Right ventricle myocardium inferior (tissue), 1 donor: ENCODE measurements at regions of chr5 and their contacts with region 1.

Region 1: DNA sequence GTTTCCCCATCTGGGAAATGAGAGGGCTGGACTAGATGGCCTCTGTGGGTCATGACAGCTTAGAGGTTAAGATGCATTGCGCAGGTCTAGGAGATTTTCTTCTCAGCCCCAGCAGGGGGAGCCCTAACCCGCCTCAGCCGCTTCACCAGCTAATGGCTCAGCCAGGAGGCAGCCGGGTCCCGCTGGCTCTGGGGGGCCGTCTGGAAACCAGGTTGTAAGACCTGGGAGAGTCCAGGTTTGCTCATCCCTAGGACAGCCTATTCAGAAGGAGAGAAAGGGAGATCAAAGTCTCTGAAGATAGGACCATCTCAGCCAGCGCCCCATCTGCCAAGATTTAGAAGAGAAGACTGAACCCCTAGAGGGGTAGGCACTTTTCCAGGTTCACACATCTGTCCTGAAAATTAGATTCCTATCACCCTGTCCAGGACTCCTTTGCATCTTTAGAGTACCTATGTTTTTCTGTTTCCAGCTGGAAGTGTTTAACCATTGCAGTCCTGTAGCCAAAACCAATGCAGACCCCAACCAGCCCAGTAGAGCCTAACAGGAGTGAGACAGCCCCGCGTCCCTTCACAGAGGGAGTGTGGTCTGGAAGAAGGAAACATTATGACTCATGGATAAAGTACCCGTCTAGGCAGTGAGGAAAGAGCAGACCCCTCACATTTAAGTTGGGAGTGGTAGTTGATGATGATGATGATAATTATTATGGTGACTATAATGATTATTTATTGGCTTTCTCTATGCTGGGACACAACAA is 27.5 kb downstream of the SPARC start:
- DNase-seq: peak; percentile 88
- ATAC-seq: peak; percentile 88

Region 2: DNA sequence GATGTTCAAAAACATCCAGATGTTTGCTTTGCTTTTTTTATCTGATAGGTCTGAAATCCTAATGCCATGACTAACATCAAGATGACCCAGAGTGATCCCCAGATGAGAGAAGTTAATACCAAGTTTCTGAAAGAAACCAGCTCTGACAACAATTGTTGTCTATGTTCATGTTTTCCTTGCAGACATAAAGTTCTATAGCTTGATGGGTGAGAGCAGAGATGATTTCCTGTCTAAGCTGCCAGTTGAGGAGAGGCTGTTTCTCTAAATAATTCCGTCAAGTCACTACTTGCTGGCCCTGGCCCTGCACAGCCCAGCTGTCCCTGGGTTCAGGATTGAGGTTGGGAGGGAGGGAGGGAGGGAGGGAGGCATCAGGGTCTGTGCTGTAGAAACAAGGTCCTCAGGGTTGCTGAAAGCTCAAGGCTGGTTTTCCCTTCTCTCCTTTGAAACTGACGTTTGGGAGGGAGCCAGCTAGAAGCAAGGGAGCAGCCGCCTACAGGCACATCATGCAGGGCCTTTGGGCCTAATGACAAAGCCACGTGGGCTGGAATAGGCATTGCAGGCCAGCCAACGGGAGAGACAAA is 23.7 kb after region 1 on chr5:
- intact Hi-C with region 1: loop called (anchors 2 kb)
- DNase-seq: no peak
- ATAC-seq: no peak

Region 3: GRCh38 chr5:151699071-151699901 is 40.1 kb after region 1 on chr5:
- intact Hi-C with region 1: loop called (anchors 5 kb)
- DNase-seq: peak; percentile 86
- ATAC-seq: peak; percentile 89

Region 4: DNA sequence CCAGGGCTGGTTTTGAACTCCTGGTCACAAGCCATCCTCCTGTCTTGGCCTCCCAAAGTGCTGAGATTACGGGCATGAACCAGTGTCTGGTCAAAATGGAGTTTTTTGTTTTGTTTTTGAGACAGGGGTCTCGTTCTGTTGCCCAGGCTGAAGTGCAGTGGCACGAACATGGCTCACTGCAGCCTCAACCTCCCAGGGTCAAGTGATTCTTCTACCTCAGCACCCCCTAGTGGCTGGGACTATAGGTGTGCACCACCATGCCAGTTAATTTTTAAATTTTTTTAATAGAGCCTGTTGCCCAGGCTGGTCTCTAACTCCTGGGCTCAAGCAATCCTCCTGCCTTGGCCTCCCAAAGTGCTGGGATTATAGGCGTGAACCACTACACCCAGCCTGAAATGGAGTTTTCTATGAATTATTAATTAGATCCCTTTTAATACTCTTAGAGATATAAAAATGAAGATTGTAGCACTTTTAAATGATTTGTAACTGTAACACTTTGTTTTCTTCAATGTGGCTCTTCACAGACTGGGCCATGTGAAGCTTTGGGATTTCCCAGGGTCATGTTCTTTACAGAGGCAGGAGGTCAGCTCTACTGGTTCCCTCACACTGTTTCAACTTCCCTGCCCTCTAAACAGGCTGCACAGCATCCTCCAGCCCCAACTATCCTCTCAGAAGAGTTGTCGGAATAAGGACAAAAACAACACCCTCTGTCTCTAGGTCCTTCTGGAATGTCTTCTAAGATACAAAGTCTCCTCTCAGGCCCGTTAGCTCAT is 60.2 kb after region 1 on chr5:
- intact Hi-C with region 1: loop called (anchors 1 kb)
- DNase-seq: no peak
- ATAC-seq: peak; percentile 72

Region 5: DNA sequence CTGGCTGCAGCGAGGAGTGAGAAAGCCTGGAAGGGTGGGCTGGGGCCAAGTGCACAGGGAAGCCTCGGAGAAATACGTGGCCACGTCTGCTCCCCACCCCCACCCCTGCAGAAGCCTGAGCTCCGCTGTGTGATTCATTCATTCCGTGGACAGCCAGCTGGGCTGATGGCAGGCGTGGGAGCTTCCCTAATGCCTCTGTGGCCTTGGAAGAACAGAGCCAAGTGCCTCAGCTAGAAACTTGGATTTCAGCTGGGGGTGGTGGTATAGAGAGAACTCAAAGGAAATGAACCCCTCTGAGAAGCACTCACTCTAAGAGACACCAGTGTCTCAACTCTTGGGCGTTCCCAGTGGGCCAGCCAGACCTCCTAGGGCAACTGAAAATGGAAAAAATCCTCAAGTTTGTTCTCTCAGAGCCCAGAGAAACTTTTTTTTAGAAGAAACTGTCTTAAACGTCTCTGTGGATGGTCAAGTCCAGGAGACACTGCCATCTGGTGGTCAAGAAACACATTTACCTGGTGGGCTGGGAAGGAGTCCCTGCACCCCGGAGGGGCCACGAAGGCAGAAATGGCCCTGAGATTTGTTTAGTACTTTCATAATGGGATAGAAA is 81.3 kb after region 1 on chr5:
- intact Hi-C with region 1: loop called (anchors 1 kb)
- DNase-seq: peak; percentile 76
- ATAC-seq: peak; percentile 79

Region 6: DNA sequence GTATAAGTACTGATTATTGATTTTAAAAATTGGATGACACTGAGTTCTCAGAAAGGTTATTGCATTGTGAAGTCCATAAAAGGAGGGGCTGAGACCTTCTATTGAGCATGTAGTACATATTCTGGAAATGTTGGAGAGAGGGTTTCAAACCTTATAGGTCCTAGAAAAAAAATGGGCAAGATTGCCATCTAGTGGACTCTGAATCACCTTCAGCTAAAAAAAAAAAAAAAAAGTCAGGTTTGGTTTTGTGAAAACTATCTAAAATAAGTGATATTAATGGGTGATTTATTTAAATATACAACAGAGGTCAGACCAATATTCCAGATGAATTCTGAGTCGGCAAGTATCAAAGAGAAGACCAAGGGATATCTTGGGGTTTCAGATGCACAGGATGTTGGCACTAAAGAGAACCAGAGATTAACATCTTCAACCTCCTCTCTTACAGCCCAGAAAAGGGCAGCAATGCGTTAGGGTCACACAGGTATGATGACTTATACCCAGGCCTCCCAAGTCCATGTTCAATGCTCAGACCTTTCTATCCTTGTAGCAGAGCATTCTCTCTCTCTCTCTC is 855.7 kb after region 1 on chr5:
- intact Hi-C with region 1: loop called (anchors 5 kb)
- DNase-seq: no peak
- ATAC-seq: no peak